Activated CD4-positive, alpha-beta T cell treated with anti-CD3 and anti-CD28 coated beads for 36 hours (primary cell): ENCODE measurements at regions of chr3 and their contacts with region 1.

Region 1: GRCh38 chr3:142651711-142652110 is 55.5 kb downstream of the PLS1 start:
- DNase-seq: no peak
- ATAC-seq: no peak
- H3K4me3 Mint-ChIP-seq: no peak overlapping the region
- H3K27ac Mint-ChIP-seq: no peak overlapping the region
- H3K4me1 Mint-ChIP-seq: no peaks in the 10 kb centered on the region
- H3K27me3 Mint-ChIP-seq: no peaks in the 10 kb centered on the region

Region 2: GRCh38 chr3:142523921-142524566 is 127.7 kb before region 1 on chr3:
- CTCF ChIA-PET with region 1: no interaction called
- POLR2A ChIA-PET with region 1: no interaction called
- intact Hi-C with region 1: no loop called
- DNase-seq: no peak
- ATAC-seq: no peak
- H3K4me3 Mint-ChIP-seq: no peak overlapping the region
- H3K27ac Mint-ChIP-seq: no peak overlapping the region
- H3K4me1 Mint-ChIP-seq: peaks cover 6% of the 10 kb centered on the region
- H3K27me3 Mint-ChIP-seq: no peaks in the 10 kb centered on the region

Region 3: GRCh38 chr3:142636050-142636449 is 15.7 kb before region 1 on chr3:
- CTCF ChIA-PET with region 1: interaction called, 4 read pairs
- POLR2A ChIA-PET with region 1: interaction called, 12 read pairs
- intact Hi-C with region 1: no loop called
- DNase-seq: no peak
- ATAC-seq: no peak
- H3K4me3 Mint-ChIP-seq: no peak overlapping the region
- H3K27ac Mint-ChIP-seq: no peak overlapping the region
- H3K4me1 Mint-ChIP-seq: no peaks in the 10 kb centered on the region
- H3K27me3 Mint-ChIP-seq: peaks cover 2% of the 10 kb centered on the region

Region 4: DNA sequence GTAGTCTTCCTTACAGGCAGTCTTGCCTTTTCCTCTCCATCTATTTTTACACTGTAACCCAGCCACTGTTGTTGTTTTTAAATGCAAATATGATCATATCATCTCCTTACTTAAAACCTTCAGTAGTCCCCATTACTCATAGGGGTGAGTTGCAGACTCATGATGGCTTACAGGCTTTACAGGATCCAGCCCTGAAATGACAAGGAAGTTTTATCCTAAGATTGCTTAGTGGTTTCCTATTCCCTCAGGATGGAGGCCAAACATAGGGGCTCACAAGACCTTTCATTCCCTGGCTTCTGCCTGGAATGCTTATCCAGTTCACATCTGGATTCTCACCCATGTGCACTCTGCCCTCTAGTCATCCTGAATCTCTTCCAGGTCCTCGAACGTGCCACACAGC is 264.9 kb after region 1 on chr3:
- CTCF ChIA-PET with region 1: no interaction called
- POLR2A ChIA-PET with region 1: no interaction called
- intact Hi-C with region 1: no loop called
- DNase-seq: no peak
- ATAC-seq: no peak
- H3K4me3 Mint-ChIP-seq: no peak overlapping the region
- H3K27ac Mint-ChIP-seq: no peak overlapping the region
- H3K4me1 Mint-ChIP-seq: no peaks in the 10 kb centered on the region
- H3K27me3 Mint-ChIP-seq: peaks cover 3% of the 10 kb centered on the region